Stomach (tissue), 19 donors: ENCODE measurements at regions of chr2 and their contacts with region 1.

Region 1: DNA sequence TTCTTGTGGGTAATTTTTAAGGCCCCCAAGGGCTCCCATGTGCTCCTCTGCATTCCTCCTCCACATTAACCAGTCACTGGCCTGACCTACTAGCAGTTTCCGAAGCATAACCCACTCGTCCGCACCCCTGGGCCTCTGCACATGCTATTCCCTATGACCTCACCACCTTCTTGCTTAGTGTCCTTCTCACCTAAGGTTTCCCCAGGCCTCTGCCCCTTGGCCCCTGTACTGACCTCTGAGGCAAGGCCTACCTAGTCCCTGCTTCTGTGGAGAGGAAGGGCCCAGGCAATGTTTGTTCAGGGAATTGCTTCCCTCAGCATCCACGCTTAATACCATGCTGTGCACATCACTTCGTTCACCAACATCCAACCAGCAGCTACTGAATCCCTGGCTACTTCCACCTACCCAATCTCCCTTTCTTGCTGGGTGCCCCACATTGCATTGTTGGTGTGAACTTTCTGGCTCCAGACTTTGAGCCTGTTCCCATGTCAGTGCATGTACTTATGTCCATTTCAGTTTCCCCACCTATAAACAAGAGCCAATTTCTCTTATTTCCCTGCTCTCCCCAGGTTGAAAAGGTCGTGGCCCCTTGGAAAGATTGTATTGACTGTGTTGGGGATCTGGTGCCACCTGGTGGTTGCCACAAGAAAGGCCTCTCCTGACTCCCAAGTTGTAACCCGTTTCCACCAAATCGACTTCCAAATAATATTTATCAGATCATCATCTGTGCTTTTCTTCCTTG is 19.2 kb upstream of the TMEM177 start:
- DNase-seq: peak; percentile 48 to 59
- H3K4me3 ChIP-seq: no peak overlapping the region
- H3K27ac ChIP-seq: no peak overlapping the region
- H3K4me1 ChIP-seq: no peaks in the 10 kb centered on the region
- H3K27me3 ChIP-seq: no peaks in the 10 kb centered on the region
- CTCF ChIP-seq: peak in 5 of 7 experiments; percentile 64 to 84 (median 81)
- EP300 ChIP-seq: no peak
- POLR2A ChIP-seq: no peak

Region 2: DNA sequence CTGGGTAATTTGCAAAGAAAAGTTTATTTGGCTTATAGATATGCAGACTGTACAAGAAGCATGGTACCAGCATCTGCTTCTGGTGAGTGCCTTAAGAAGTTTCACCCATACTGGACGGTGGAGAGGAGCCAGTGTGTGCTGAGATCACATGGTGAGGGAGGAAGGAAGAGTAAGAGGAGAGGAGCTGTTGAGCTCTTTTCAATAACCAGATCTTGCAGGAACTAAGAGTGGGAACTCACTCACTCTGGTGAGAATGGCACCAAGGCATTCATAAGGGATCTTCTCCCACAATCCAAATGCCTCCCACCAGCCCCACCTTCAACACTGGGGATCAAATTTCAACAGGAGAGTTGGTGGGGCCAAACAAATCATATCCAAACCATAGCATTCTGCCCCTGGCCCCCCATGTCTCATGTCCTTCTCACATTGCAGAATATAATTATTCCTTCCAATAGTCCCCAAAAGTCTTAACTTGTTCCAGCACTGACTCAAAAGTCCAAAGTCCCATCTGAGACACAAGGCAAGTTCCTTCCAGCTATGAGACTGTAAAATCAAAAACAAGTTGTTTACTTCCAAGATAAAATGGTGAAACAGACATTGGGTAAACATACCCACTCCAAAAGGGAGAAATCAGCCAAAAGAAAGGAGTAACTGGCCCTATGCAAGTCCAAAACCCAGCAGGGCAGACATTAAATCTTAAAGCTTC is 239.8 kb before region 1 on chr2:
- intact Hi-C with region 1: loop called (anchors 10 kb)
- DNase-seq: no peak
- H3K4me3 ChIP-seq: no peak overlapping the region
- H3K27ac ChIP-seq: peak overlapping the region in 3 of 5 donors; percentile 13 to 66 (median 44)
- H3K4me1 ChIP-seq: peaks cover 0 to 37% (median 9%) of the 10 kb centered on the region in 4 donors
- H3K27me3 ChIP-seq: no peaks in the 10 kb centered on the region
- CTCF ChIP-seq: no peak
- EP300 ChIP-seq: no peak
- POLR2A ChIP-seq: no peak